PC-9 (cell line): ENCODE measurements at regions of chr12 and their contacts with region 1.

Region 1: DNA sequence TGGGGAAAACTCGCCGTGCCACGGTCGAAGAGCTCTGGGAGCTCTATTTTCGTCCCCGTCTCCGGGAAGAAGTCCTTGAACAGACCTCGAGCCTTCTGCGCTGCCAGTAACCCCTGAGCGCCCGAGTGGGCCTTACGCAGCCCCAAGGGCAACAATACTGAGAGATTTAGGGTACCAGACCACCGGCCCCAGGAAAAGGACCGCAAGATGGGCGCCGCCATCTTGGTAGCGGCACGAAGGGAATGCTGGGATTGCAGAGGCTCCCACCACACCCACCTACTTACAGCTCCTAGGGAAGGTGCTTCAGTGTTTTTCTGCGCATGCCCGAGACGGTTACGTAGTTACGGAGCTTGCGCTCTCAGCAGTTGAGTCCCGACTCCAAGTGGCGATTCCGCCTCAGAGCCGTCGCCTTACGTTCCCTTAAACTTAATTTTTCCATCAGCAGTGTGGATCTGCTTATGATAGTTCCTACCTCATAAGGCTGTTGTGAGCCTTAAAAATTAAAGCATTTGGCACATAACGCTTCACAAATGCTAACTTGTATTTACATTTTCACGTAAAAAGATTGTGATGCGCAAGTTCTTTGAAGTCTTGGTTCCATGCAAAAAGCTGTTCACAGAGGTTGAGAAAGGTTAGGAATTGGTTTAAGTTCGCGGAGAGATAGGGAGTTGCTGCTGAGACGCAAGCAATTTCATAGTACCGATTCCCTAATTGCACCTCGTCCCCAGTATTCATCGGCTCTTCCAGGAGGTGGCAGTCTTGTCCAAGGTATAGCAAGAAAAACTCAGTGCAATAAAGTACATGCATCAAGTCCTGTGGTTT is at the start of gene YARS2:
- DNase-seq: peak; percentile 92 to 94
- H3K4me3 ChIP-seq: peak within 1 kb of the TSS; percentile 84
- H3K27ac ChIP-seq: peak within 1 kb of the TSS; percentile 91
- H3K4me1 ChIP-seq: peaks cover 21% of the 10 kb centered on the region
- H3K27me3 ChIP-seq: no peaks in the 10 kb centered on the region
- CTCF ChIP-seq: peak; percentile 93
- total RNA-seq, gene YARS2: 34.3 and 36.6 TPM in 2 replicates

Region 2: GRCh38 chr12:32062881-32063280 is 693.0 kb before region 1 on chr12:
- CTCF ChIA-PET with region 1: no interaction called
- POLR2A ChIA-PET with region 1: no interaction called
- intact Hi-C with region 1: loop called (anchors 1 kb)
- DNase-seq: no peak
- H3K4me3 ChIP-seq: no peak overlapping the region
- H3K27ac ChIP-seq: no peak overlapping the region
- H3K4me1 ChIP-seq: no peaks in the 10 kb centered on the region
- H3K27me3 ChIP-seq: no peaks in the 10 kb centered on the region
- CTCF ChIP-seq: no peak

Region 3: GRCh38 chr12:32679091-32679919 is 76.6 kb before region 1 on chr12 and contains the start of gene DNM1L:
- CTCF ChIA-PET with region 1: no interaction called
- POLR2A ChIA-PET with region 1: interaction called, 39 read pairs
- intact Hi-C with region 1: loop called (anchors 2 kb)
- DNase-seq: peak; percentile 87 to 99
- H3K4me3 ChIP-seq: peak within 1 kb of the TSS; percentile 82
- H3K27ac ChIP-seq: peak within 1 kb of the TSS; percentile 71
- H3K4me1 ChIP-seq: peaks cover 26% of the 10 kb centered on the region
- H3K27me3 ChIP-seq: no peaks in the 10 kb centered on the region
- CTCF ChIP-seq: no peak
- total RNA-seq, gene DNM1L: 95.8 and 112 TPM in 2 replicates

Region 4: DNA sequence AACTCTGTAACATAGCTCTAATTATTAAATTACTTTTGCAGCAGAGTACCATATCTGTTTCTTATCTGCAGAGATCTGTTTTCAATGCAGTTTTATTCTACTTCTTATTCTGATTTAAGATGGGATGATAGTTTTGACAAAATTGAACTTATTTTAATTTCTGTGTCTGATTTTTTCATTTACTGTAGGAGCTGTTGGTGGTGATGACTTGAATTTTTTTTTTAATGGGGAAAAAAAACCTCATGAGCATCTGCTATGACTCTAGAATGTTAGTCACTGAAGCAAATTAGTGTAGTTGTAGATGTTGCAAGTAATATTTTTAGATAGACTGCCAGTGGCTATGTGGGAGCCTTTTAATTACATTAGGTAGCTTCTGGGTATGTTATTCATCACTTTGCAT is 53.4 kb before region 1 on chr12:
- CTCF ChIA-PET with region 1: no interaction called
- POLR2A ChIA-PET with region 1: no interaction called
- intact Hi-C with region 1: no loop called
- DNase-seq: no peak
- H3K4me3 ChIP-seq: no peak overlapping the region
- H3K27ac ChIP-seq: no peak overlapping the region
- H3K4me1 ChIP-seq: no peaks in the 10 kb centered on the region
- H3K27me3 ChIP-seq: no peaks in the 10 kb centered on the region
- CTCF ChIP-seq: no peak

Region 5: DNA sequence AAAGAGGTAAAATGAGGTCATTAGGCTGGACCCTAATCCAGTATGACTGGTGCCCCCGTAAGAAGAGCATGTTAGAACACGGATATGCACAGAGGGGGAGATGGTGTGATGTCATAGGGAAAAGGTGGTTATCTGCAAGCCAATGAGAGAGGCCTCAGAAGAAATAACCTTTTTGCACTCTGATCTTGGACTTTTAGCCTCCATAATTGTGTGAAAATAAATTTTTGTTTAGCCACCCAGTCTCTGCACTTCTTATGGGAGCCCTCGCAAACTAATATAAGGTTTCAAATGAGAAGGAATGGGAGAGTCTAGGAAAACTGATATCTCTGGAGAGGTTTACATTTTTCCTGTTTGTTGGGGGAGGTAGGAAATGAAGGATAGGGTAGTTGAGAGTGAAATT is 183.9 kb after region 1 on chr12:
- CTCF ChIA-PET with region 1: interaction called, 15 read pairs
- POLR2A ChIA-PET with region 1: interaction called, 4 read pairs
- intact Hi-C with region 1: loop called (anchors 1 kb)
- DNase-seq: no peak
- H3K4me3 ChIP-seq: no peak overlapping the region
- H3K27ac ChIP-seq: no peak overlapping the region
- H3K4me1 ChIP-seq: peaks cover 21% of the 10 kb centered on the region
- H3K27me3 ChIP-seq: no peaks in the 10 kb centered on the region
- CTCF ChIP-seq: no peak

Region 6: DNA sequence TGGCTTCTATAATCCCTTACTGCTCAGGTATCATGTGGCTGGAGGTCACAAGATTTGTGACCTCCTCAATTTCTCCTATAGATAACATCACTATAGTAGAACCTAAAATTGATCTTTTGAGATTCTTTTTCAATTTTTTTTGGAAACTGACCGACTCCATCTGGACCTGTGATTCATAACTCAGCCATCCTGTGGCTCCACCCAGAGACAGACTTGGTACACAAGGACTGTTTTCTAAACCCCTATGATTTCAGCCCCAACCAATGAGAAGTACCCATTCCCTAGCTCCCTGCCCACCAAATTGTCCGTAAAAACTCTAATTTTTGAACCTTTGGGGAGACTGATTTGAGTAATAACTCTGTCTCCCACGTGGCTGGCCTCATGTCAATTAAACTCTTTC is 534.8 kb after region 1 on chr12:
- CTCF ChIA-PET with region 1: no interaction called
- POLR2A ChIA-PET with region 1: no interaction called
- intact Hi-C with region 1: loop called (anchors 5 kb)
- DNase-seq: no peak
- H3K4me3 ChIP-seq: no peak overlapping the region
- H3K27ac ChIP-seq: no peak overlapping the region
- H3K4me1 ChIP-seq: no peaks in the 10 kb centered on the region
- H3K27me3 ChIP-seq: no peaks in the 10 kb centered on the region
- CTCF ChIP-seq: no peak

Region 7: GRCh38 chr12:34022079-34022830 is 1266.4 kb after region 1 on chr12 and contains the start of gene ALG10:
- CTCF ChIA-PET with region 1: interaction called, 11 read pairs
- POLR2A ChIA-PET with region 1: interaction called, 8 read pairs
- intact Hi-C with region 1: loop called (anchors 1 kb)
- DNase-seq: peak; percentile 93 to 99
- H3K4me3 ChIP-seq: peak within 1 kb of the TSS; percentile 76
- H3K27ac ChIP-seq: peak within 1 kb of the TSS; percentile 49
- H3K4me1 ChIP-seq: peaks cover 19% of the 10 kb centered on the region
- H3K27me3 ChIP-seq: no peaks in the 10 kb centered on the region
- CTCF ChIP-seq: peak; percentile 86
- total RNA-seq, gene ALG10: 21.5 and 23.3 TPM in 2 replicates